ENCODE measurements at regions of chr17 and their contacts with region 1.

Region 1: DNA sequence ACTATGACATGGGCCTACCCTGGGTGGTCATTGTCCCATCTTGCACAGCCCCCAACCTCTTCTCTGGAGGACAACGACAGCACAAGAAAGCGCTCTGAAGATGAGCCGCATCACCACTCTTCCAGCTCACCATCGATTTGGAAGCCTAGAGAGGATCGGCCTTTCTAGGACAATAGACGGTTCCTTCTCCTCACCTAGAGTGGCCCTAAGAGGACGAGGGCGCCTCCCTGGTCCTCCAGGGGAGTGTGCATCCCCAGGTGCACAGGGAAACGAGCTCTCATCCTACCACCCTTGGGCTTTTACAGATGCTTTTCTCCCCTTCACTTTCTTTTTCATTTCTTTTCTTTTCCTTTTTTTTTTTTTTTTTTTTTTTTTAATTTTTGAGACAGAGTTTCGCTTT is 20.3 kb upstream of the SLC52A1 start:
- DNase-seq: no peak
- ATAC-seq: no peak
- H3K4me3 Mint-ChIP-seq: no peak overlapping the region
- H3K27ac Mint-ChIP-seq: no peak overlapping the region
- H3K4me1 Mint-ChIP-seq: peaks cover under 1% of the 10 kb centered on the region
- H3K27me3 Mint-ChIP-seq: no peaks in the 10 kb centered on the region

Region 2: GRCh38 chr17:4934173-4934979 is 121.2 kb before region 1 on chr17:
- CTCF ChIA-PET with region 1: no interaction called
- POLR2A ChIA-PET with region 1: no interaction called
- DNase-seq: peak; percentile 35
- ATAC-seq: peak; percentile 20
- H3K4me3 Mint-ChIP-seq: no peak overlapping the region
- H3K27ac Mint-ChIP-seq: peak overlapping the region; percentile 50
- H3K4me1 Mint-ChIP-seq: peaks cover 47% of the 10 kb centered on the region
- H3K27me3 Mint-ChIP-seq: no peaks in the 10 kb centered on the region

Region 3: GRCh38 chr17:5031365-5032082 is 24.0 kb before region 1 on chr17:
- CTCF ChIA-PET with region 1: interaction called, 87 read pairs
- POLR2A ChIA-PET with region 1: no interaction called
- DNase-seq: peak; percentile 89
- ATAC-seq: peak; percentile 80
- H3K4me3 Mint-ChIP-seq: peak overlapping the region; percentile 81
- H3K27ac Mint-ChIP-seq: peak overlapping the region; percentile 86
- H3K4me1 Mint-ChIP-seq: peaks cover 17% of the 10 kb centered on the region
- H3K27me3 Mint-ChIP-seq: peaks cover 3% of the 10 kb centered on the region

Measured in activated CD8-positive, alpha-beta T cell treated with anti-CD3 and anti-CD28 coated beads, Interleukin-2, amount 10 ng/mL, durations not matched to agents 7 days and 5 days (primary cell).